ENCODE measurements at regions of chr17 and their contacts with region 1.

Region 1: DNA sequence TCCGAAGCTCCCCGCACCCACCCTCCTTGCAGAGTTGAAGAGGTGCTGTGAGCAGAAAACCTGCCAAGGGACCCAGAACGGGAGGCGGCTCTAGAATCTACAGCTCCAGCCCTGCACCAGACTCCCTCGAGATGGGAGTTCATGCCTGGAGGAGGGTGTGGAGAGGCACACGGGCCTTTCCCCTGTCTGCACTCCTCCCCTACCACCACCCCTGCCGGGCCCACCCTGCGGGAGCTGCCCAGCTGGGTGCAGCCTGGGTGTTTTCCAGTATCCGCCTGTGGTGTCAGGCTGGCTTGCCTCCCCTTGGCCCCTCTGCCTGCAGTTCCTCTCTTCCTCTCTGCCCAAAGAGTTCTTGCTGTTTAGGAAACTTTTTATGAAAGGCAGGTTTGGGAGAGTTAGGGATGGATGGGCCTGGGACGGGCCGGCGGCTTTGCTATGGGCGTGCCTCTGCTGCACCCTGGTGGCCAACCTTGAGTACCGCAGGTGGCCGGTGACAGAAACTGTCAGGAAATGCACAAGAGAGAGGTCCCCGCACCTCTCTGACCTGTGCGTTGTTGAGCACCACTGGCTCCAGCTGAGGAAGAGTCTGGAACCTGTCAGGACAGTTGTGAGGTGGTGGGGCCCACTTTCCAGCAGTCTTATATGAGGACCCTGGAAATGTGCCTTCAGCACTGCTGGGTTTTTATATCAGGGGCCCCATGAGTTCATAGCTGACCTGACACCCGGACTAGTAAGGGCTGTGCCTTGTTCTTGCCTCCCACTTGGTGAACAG is 354.1 kb downstream of the SEC14L1 start:
- DNase-seq: peak; percentile 64 to 78 (median 70)
- H3K4me3 ChIP-seq: no peak overlapping the region
- H3K4me3 Mint-ChIP-seq: peak overlapping the region in 2 of 8 donors; percentile 5 to 35
- H3K27ac ChIP-seq: peak overlapping the region; percentile 10
- H3K27ac Mint-ChIP-seq: peak overlapping the region; percentile 57 to 94 (median 87)
- H3K4me1 ChIP-seq: peaks cover 41% of the 10 kb centered on the region
- H3K4me1 Mint-ChIP-seq: peaks cover 8 to 45% (median 17%) of the 10 kb centered on the region in 4 donors
- H3K27me3 ChIP-seq: no peaks in the 10 kb centered on the region
- H3K27me3 Mint-ChIP-seq: no peaks in the 10 kb centered on the region

Region 2: DNA sequence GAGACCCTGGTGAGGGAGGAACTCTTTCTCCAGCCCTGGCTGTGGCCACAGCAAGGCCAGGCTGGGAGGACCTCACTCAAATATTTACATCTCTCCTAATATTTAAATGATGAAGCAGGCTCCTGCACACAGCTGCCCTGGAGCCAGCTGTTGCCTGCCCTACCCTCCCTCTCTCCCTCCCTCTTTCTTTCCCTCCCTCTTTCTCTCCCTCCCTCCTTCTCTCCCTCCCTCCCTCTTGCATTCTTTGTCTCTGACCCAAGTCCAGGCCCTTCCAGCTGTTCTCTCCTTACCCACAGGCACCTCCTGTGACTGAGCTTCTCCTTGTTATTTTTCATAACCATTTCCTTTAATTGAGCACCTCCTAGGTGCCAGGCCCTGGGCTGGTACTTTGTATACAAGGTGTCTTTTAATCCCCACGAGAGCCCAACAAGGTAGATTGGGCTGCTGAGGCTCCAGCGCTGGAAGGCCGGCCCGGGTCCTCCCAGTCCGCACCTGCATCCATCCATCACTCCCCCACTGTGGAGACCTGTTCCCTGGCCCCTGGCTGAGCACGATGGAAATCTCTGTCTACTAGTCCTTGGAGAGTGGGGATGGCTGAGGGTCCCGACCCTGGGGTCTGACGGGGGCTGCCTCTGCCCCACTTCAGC is 111.8 kb before region 1 on chr17:
- CTCF ChIA-PET with region 1: interaction called, 12 read pairs
- POLR2A ChIA-PET with region 1: interaction called, 15 read pairs
- intact Hi-C with region 1: loop called (anchors 1 kb)
- DNase-seq: no peak
- H3K4me3 ChIP-seq: peak overlapping the region in 1 of 2 donors; percentile 41
- H3K4me3 Mint-ChIP-seq: peak overlapping the region; percentile 74 to 94 (median 82)
- H3K27ac ChIP-seq: peak overlapping the region; percentile 50
- H3K27ac Mint-ChIP-seq: peak overlapping the region; percentile 82 to 95 (median 90)
- H3K4me1 ChIP-seq: peaks cover 98% of the 10 kb centered on the region
- H3K4me1 Mint-ChIP-seq: peaks cover 56 to 97% (median 84%) of the 10 kb centered on the region in 4 donors
- H3K27me3 ChIP-seq: no peaks in the 10 kb centered on the region
- H3K27me3 Mint-ChIP-seq: no peaks in the 10 kb centered on the region

Region 3: GRCh38 chr17:77420804-77421629 is 73.8 kb before region 1 on chr17:
- CTCF ChIA-PET with region 1: interaction called, 12 read pairs
- POLR2A ChIA-PET with region 1: interaction called, 6 read pairs
- intact Hi-C with region 1: no loop called
- DNase-seq: peak; percentile 56 to 83 (median 62)
- H3K4me3 ChIP-seq: peak overlapping the region in 1 of 2 donors; percentile 43
- H3K4me3 Mint-ChIP-seq: peak overlapping the region; percentile 72 to 84 (median 78)
- H3K27ac ChIP-seq: peak overlapping the region; percentile 64
- H3K27ac Mint-ChIP-seq: peak overlapping the region; percentile 93 to 96 (median 96)
- H3K4me1 ChIP-seq: peaks cover 98% of the 10 kb centered on the region
- H3K4me1 Mint-ChIP-seq: peaks cover 27 to 81% (median 49%) of the 10 kb centered on the region in 4 donors
- H3K27me3 ChIP-seq: no peaks in the 10 kb centered on the region
- H3K27me3 Mint-ChIP-seq: no peaks in the 10 kb centered on the region

Region 4: GRCh38 chr17:77451245-77451893 is 43.5 kb before region 1 on chr17:
- CTCF ChIA-PET with region 1: interaction called, 7 read pairs
- POLR2A ChIA-PET with region 1: interaction called, 30 read pairs
- intact Hi-C with region 1: loop called (anchors 5 kb)
- DNase-seq: peak; percentile 65 to 83 (median 73)
- H3K4me3 ChIP-seq: peak overlapping the region; percentile 94 to 96
- H3K4me3 Mint-ChIP-seq: peak overlapping the region; percentile 90 to 100 (median 96)
- H3K27ac ChIP-seq: peak overlapping the region; percentile 73
- H3K27ac Mint-ChIP-seq: peak overlapping the region; percentile 81 to 100 (median 98)
- H3K4me1 ChIP-seq: peaks cover 61% of the 10 kb centered on the region
- H3K4me1 Mint-ChIP-seq: peaks cover 25 to 91% (median 45%) of the 10 kb centered on the region in 4 donors
- H3K27me3 ChIP-seq: no peaks in the 10 kb centered on the region
- H3K27me3 Mint-ChIP-seq: no peaks in the 10 kb centered on the region

Region 5: GRCh38 chr17:77465358-77466041 is 29.4 kb before region 1 on chr17:
- CTCF ChIA-PET with region 1: interaction called, 9 read pairs
- POLR2A ChIA-PET with region 1: interaction called, 74 read pairs
- intact Hi-C with region 1: no loop called
- DNase-seq: peak; percentile 82 to 94 (median 84)
- H3K4me3 ChIP-seq: peak overlapping the region; percentile 6 to 47
- H3K4me3 Mint-ChIP-seq: peak overlapping the region; percentile 80 to 90 (median 84)
- H3K27ac ChIP-seq: peak overlapping the region; percentile 50
- H3K27ac Mint-ChIP-seq: peak overlapping the region; percentile 83 to 97 (median 85)
- H3K4me1 ChIP-seq: peaks cover 99% of the 10 kb centered on the region
- H3K4me1 Mint-ChIP-seq: peaks cover 60 to 95% (median 79%) of the 10 kb centered on the region in 4 donors
- H3K27me3 ChIP-seq: no peaks in the 10 kb centered on the region
- H3K27me3 Mint-ChIP-seq: no peaks in the 10 kb centered on the region

Region 6: GRCh38 chr17:77471984-77472461 is 22.8 kb before region 1 on chr17:
- CTCF ChIA-PET with region 1: interaction called, 6 read pairs
- POLR2A ChIA-PET with region 1: interaction called, 32 read pairs
- intact Hi-C with region 1: no loop called
- DNase-seq: peak in 1 of 5 donors; percentile 34
- H3K4me3 ChIP-seq: peak overlapping the region; percentile 18 to 48
- H3K4me3 Mint-ChIP-seq: peak overlapping the region; percentile 43 to 91 (median 74)
- H3K27ac ChIP-seq: peak overlapping the region; percentile 51
- H3K27ac Mint-ChIP-seq: peak overlapping the region; percentile 82 to 98 (median 93)
- H3K4me1 ChIP-seq: peaks cover 100% of the 10 kb centered on the region
- H3K4me1 Mint-ChIP-seq: peaks cover 67 to 99% (median 90%) of the 10 kb centered on the region in 4 donors
- H3K27me3 ChIP-seq: no peaks in the 10 kb centered on the region
- H3K27me3 Mint-ChIP-seq: no peaks in the 10 kb centered on the region

Region 7: DNA sequence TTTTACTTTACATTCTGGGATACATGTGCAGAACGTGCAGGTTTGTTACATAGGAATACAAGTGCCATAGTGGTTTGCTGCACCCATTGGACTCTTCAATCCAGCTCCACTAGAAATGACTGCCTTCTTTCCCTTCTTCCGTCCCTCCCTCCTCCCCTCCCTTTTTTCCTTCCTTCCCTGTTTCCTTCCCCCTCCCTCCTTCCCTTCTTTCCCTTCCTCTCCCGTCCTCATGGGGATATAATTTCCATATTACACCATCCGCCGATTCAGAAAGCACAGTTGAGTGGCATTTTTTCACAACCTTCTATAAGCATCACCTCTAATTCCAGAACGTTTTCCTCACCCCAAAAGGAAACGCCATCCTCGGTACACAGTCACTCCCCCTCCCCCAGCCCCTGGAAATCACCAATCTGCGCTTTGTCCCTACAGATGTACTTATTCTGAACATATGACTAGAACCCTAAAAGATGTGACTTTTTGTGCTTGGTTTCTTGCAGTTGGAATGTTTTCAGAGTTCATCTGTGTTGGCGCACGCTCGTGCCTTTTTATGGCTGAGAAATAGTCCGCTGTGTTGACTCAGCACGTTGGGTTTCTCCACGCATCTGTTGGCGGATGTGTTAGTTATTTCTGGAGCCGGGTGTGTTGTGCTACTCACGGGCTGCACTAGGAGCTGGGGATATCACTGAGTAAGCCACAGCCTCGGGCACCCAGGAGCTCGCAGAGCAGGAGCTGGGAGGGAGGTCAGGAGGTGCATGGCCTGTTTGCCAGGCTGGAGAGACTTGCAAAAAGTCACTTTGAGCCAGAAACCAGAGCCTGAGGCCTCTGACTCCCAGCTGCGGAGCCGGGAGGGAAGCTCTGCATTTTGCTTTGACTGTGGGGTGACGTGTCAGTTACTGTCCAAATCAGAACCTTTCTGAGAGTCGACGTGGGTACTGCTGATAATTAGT is 17.6 kb before region 1 on chr17:
- CTCF ChIA-PET with region 1: interaction called, 6 read pairs
- POLR2A ChIA-PET with region 1: interaction called, 32 read pairs
- intact Hi-C with region 1: no loop called
- DNase-seq: peak in 1 of 5 donors; percentile 43
- H3K4me3 ChIP-seq: no peak overlapping the region
- H3K4me3 Mint-ChIP-seq: peak overlapping the region in 6 of 8 donors; percentile 33 to 75 (median 55)
- H3K27ac ChIP-seq: peak overlapping the region; percentile 30
- H3K27ac Mint-ChIP-seq: peak overlapping the region; percentile 74 to 94 (median 87)
- H3K4me1 ChIP-seq: peaks cover 99% of the 10 kb centered on the region
- H3K4me1 Mint-ChIP-seq: peaks cover 57 to 83% (median 69%) of the 10 kb centered on the region in 4 donors
- H3K27me3 ChIP-seq: no peaks in the 10 kb centered on the region
- H3K27me3 Mint-ChIP-seq: no peaks in the 10 kb centered on the region